ENCODE measurements at regions of chr15 and their contacts with region 1.

Region 1: GRCh38 chr15:50876989-50877360 is 31.5 kb upstream of the AP4E1 start:
- DNase-seq: peak; percentile 74 to 90 (median 76)
- ATAC-seq: peak; percentile 74
- H3K4me3 ChIP-seq: no peak overlapping the region
- H3K27ac ChIP-seq: peak overlapping the region; percentile 14
- H3K4me1 ChIP-seq: peaks cover 0 to 19% of the 10 kb centered on the region in 2 experiments; a peak in 3 of 5 replicates
- H3K27me3 ChIP-seq: no peaks in the 10 kb centered on the region
- CTCF ChIP-seq: peak; percentile 87 to 95 (median 95)
- EP300 ChIP-seq: no peak
- POLR2A ChIP-seq: no peak
- RAD21 ChIP-seq: peak; percentile 94 to 95

Region 2: DNA sequence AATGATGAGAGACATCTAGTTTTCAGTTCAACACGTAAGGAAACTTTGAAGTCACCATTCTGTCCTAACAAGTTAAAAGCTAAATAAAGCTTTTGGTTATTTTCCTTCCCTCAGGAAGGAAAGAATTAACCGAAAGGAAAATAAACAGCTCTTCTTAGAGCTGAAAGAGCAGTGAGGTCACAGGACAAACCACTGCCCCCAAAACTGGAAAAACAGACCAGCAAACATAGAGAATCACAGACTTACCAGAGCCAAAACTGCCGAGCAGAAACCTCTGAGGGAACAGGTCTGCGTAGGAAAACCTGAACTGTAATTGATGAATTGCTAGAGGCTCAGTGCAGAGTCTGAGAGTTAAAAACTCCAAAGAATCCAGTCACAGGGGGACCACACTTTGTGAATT is 345.2 kb before region 1 on chr15:
- CTCF ChIA-PET with region 1: no interaction called
- POLR2A ChIA-PET with region 1: no interaction called
- in situ Hi-C with region 1: no loop called
- intact Hi-C with region 1: loop called (anchors 10 kb)
- DNase-seq: no peak
- ATAC-seq: peak; percentile 38
- H3K4me3 ChIP-seq: no peak overlapping the region
- H3K27ac ChIP-seq: no peak overlapping the region
- H3K4me1 ChIP-seq: no peaks in the 10 kb centered on the region; a peak in 1 of 5 replicates
- H3K27me3 ChIP-seq: no peaks in the 10 kb centered on the region
- CTCF ChIP-seq: no peak
- EP300 ChIP-seq: no peak
- POLR2A ChIP-seq: no peak
- RAD21 ChIP-seq: no peak

Region 3: GRCh38 chr15:50669611-50670010 is 207.4 kb before region 1 on chr15:
- CTCF ChIA-PET with region 1: no interaction called
- POLR2A ChIA-PET with region 1: no interaction called
- in situ Hi-C with region 1: loop called (anchors 5 kb)
- intact Hi-C with region 1: no loop called
- DNase-seq: no peak
- ATAC-seq: no peak
- H3K4me3 ChIP-seq: no peak overlapping the region
- H3K27ac ChIP-seq: no peak overlapping the region
- H3K4me1 ChIP-seq: no peaks in the 10 kb centered on the region; a peak in 1 of 5 replicates
- H3K27me3 ChIP-seq: no peaks in the 10 kb centered on the region
- CTCF ChIP-seq: no peak
- EP300 ChIP-seq: no peak
- POLR2A ChIP-seq: no peak
- RAD21 ChIP-seq: no peak

Region 4: GRCh38 chr15:50675536-50676144 is 201.3 kb before region 1 on chr15:
- CTCF ChIA-PET with region 1: interaction called, 12 read pairs
- POLR2A ChIA-PET with region 1: no interaction called
- in situ Hi-C with region 1: no loop called
- intact Hi-C with region 1: loop called (anchors 1 kb)
- DNase-seq: peak in 1 of 4 experiments; percentile 27
- ATAC-seq: no peak
- H3K4me3 ChIP-seq: no peak overlapping the region
- H3K27ac ChIP-seq: no peak overlapping the region
- H3K4me1 ChIP-seq: peaks cover 7 to 12% of the 10 kb centered on the region in 2 experiments; a peak in 4 of 5 replicates
- H3K27me3 ChIP-seq: no peaks in the 10 kb centered on the region
- CTCF ChIP-seq: peak; percentile 48 to 77 (median 50); a peak in 4 of 6 replicates
- EP300 ChIP-seq: no peak
- POLR2A ChIP-seq: no peak
- RAD21 ChIP-seq: peak; percentile 56 to 77

Region 5: DNA sequence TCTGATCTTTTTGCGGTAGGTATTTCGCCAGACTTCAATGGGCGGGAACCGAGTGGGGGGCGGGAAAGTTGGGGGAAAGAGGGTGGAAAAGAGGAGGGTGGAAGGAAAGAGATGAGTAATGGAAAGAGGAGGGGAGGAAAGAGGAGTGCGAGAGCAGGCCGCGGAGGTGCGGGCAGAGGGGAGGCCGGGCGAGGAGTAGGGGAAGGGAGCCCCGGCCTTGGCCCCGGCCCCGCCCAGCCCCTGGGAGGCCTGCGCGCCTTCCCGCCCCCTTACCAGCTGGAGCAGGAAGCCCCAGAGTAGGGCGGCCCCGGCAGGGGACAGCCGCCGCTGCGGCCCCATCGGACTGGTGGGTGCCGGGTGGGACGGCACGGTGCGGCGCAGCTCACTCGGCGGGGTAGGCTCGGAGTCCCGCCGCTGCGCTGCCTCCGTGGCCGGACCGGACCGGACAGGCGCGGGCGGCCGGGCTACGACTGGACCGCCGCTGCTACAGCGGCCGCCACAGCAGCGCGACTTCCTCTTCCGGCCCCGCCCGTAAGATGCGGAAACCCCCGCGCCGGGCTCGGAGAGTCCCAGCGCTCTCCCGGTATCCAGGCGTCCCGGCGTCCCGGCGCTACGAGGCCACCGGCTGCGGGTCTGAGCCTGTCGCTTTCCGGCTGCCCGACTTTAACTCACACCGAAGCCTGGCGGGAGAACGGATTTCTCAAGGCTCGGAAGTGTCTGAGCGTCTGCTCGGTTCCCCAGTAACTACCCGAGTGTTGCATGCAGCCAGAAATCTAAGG is 111.6 kb before region 1 on chr15 and contains the start of gene SPPL2A:
- CTCF ChIA-PET with region 1: no interaction called
- POLR2A ChIA-PET with region 1: interaction called, 3 read pairs
- in situ Hi-C with region 1: no loop called
- intact Hi-C with region 1: loop called (anchors 10 kb)
- DNase-seq: peak; percentile 94 to 97 (median 96)
- ATAC-seq: peak; percentile 96
- H3K4me3 ChIP-seq: peak within 1 kb of the TSS; percentile 81
- H3K27ac ChIP-seq: peak within 1 kb of the TSS; percentile 93
- H3K4me1 ChIP-seq: peaks cover 8 to 14% of the 10 kb centered on the region in 2 experiments; a peak in 4 of 5 replicates
- H3K27me3 ChIP-seq: no peaks in the 10 kb centered on the region
- CTCF ChIP-seq: no peak
- EP300 ChIP-seq: peak; percentile 39; the same call in 1 of the 2 replicates
- POLR2A ChIP-seq: peak; percentile 94
- RAD21 ChIP-seq: 0 out of 4 replicates have a peak, but pooled peaks of 1 of the 2 experiments have one; percentile 8
- polyA plus RNA-seq, gene SPPL2A: 9.8 to 14.7 TPM

Region 6: GRCh38 chr15:50825946-50826345 is 51.0 kb before region 1 on chr15:
- CTCF ChIA-PET with region 1: no interaction called
- POLR2A ChIA-PET with region 1: no interaction called
- in situ Hi-C with region 1: no loop called
- intact Hi-C with region 1: loop called (anchors 5 kb)
- DNase-seq: no peak
- ATAC-seq: no peak
- H3K4me3 ChIP-seq: no peak overlapping the region
- H3K27ac ChIP-seq: no peak overlapping the region
- H3K4me1 ChIP-seq: no peaks in the 10 kb centered on the region; a peak in 1 of 5 replicates
- H3K27me3 ChIP-seq: peaks cover 2 to 5% of the 10 kb centered on the region in 2 experiments; a peak in 2 of 5 replicates
- CTCF ChIP-seq: no peak
- EP300 ChIP-seq: no peak
- POLR2A ChIP-seq: no peak
- RAD21 ChIP-seq: no peak

Region 7: GRCh38 chr15:50940506-50940905 is 63.5 kb after region 1 on chr15:
- CTCF ChIA-PET with region 1: no interaction called
- POLR2A ChIA-PET with region 1: no interaction called
- in situ Hi-C with region 1: no loop called
- intact Hi-C with region 1: no loop called
- DNase-seq: peak in 1 of 4 experiments; percentile 9
- ATAC-seq: no peak
- H3K4me3 ChIP-seq: no peak overlapping the region
- H3K27ac ChIP-seq: no peak overlapping the region
- H3K4me1 ChIP-seq: 0 out of 5 replicates have a peak, but pooled peaks cover 0 to 5% of the 10 kb centered on the region in 2 experiments
- H3K27me3 ChIP-seq: no peaks in the 10 kb centered on the region
- CTCF ChIP-seq: no peak
- EP300 ChIP-seq: no peak
- POLR2A ChIP-seq: no peak
- RAD21 ChIP-seq: no peak